Caco-2 (cell line): ENCODE measurements at regions of chr3 and their contacts with region 1.

Region 1: DNA sequence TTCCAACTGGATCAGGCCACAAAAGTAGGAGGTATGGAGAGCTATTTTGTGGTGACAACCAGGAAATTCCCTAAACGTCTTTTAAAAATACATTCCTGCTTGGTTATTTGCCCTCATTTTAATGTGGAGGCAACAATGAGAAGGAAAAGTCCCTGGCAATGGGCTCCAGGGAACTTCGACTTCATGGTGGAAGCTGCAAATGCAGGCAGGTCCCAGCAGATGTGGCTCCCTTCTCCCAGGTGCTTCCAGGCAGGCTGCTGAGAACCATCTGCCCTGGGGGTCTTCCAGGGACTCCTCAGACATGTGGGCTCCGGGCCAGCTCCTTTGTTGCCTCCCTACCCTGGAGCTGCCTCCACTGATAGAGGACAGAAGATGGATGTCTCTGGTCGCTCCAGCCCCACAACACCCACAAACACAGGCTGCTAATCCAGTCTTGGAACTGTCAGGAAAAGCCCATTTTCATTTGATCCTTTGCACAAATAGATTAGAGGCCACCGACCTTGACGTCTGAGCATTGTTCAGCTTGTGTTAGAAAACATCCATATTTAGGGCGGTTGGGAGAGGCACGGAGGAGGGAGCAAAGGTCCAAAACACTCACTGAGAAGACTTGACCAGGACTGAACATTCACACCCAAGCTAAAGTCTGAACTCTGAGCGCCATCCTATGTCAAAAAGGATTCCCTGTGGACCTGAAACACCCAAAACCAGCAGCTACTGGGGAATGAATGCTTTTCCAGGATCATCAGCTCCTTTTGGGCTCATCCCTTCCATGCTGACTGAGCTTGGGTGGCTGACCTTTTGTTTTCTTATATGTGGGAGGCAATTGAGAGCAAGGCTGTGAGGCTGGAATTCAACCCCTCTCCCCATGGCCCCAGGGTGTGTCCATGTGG is 30.2 kb upstream of the SLCO2A1 start:
- DNase-seq: peak; percentile 30 to 44
- H3K4me3 ChIP-seq: no peak overlapping the region
- H3K4me3 Mint-ChIP-seq: no peak overlapping the region
- H3K27ac Mint-ChIP-seq: no peak overlapping the region
- H3K4me1 ChIP-seq: peaks cover 48% of the 10 kb centered on the region
- H3K4me1 Mint-ChIP-seq: peaks cover 29% of the 10 kb centered on the region
- H3K27me3 ChIP-seq: no peaks in the 10 kb centered on the region
- H3K27me3 Mint-ChIP-seq: no peaks in the 10 kb centered on the region
- CTCF ChIP-seq: peak in 1 of 2 experiments; percentile 33

Region 2: DNA sequence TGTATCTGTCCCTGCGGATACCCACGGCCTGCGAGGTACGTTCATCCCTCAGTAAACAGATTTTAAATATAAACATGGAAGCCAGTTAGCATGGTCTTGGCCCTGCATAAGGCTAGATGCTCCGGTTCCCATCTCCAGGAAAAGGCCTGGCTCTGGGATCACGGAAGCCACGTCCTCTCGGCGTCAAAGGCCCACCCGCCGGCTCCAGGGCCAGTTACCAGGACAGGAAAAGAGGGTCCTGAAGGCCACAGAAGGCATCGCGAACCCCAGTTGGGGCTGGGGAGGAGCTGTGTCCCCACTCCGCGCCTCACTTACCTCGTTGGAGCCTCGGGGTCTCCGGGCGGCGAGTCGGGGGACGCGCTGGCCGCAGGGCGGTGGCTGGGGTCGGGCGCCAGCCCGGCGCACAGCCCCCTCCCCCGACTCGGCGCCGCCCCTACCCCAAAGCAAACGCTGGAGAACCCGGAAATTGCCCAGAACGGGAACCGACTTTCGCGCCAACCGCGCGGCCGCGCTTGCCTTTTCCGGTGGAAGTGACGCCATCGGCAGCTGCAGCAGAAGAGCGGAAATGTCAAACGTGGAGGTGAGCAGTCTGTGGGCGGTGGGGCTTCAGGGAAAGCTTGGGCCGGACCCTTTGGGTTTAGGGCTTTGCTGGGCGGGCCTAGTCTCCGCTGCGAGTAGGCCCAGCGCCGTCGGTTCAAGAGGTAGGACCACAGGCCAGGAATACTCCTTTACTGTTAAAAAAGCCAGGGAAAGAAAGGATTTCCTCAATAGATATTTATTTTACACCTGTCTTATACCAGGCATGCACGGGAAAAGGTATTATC is 398.2 kb before region 1 on chr3 and contains the start of gene TOPBP1:
- CTCF ChIA-PET with region 1: no interaction called
- POLR2A ChIA-PET with region 1: no interaction called
- intact Hi-C with region 1: loop called (anchors 5 kb)
- DNase-seq: peak; percentile 85 to 87
- H3K4me3 ChIP-seq: peak within 1 kb of the TSS; percentile 78
- H3K4me3 Mint-ChIP-seq: peak within 1 kb of the TSS; percentile 80
- H3K27ac Mint-ChIP-seq: peak within 1 kb of the TSS; percentile 80
- H3K4me1 ChIP-seq: peaks cover 24% of the 10 kb centered on the region
- H3K4me1 Mint-ChIP-seq: peaks cover 15% of the 10 kb centered on the region
- H3K27me3 ChIP-seq: no peaks in the 10 kb centered on the region
- H3K27me3 Mint-ChIP-seq: no peaks in the 10 kb centered on the region
- CTCF ChIP-seq: no peak
- total RNA-seq, gene TOPBP1: 57.1 and 68.2 TPM in 2 replicates

Region 3: DNA sequence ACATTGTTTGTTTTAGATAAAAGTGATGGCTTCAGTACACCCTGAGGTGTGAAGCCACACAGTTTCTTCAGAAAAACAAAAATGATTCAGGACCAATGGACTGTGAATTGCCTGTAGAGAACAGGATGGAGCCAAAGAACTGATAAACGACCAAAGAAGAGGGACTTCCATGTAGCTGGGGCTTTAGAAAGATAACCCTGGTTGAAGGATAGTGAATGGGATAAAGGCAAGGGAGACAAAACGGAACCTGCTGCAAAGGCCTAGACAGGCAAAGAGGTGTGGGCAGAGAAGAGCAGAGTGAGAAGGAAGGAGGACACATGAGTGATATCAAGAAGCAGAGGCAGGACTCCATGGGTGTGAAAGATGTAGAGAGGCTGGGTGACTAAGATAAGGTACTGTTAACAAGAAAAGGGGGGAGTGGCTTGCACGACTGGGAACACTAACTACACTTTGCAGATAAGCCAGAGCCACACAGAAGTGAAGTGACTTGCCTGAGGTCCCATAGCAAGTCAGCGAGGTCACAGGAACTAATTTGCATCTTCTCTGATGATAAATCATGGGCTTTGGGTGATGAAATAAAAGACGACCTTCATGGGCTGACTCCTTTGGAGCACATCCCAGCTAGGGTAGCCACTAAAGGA is 208.5 kb before region 1 on chr3:
- CTCF ChIA-PET with region 1: no interaction called
- POLR2A ChIA-PET with region 1: no interaction called
- intact Hi-C with region 1: no loop called
- DNase-seq: peak in 1 of 2 experiments; percentile 5
- H3K4me3 ChIP-seq: no peak overlapping the region
- H3K4me3 Mint-ChIP-seq: no peak overlapping the region
- H3K27ac Mint-ChIP-seq: no peak overlapping the region
- H3K4me1 ChIP-seq: no peaks in the 10 kb centered on the region
- H3K4me1 Mint-ChIP-seq: peaks cover 8% of the 10 kb centered on the region
- H3K27me3 ChIP-seq: no peaks in the 10 kb centered on the region
- H3K27me3 Mint-ChIP-seq: peaks cover 8% of the 10 kb centered on the region
- CTCF ChIP-seq: no peak

Region 4: GRCh38 chr3:133930341-133930933 is 129.5 kb before region 1 on chr3:
- CTCF ChIA-PET with region 1: interaction called, 5 read pairs
- POLR2A ChIA-PET with region 1: no interaction called
- intact Hi-C with region 1: loop called (anchors 1 kb)
- DNase-seq: peak in 1 of 2 experiments; percentile 49
- H3K4me3 ChIP-seq: no peak overlapping the region
- H3K4me3 Mint-ChIP-seq: no peak overlapping the region
- H3K27ac Mint-ChIP-seq: no peak overlapping the region
- H3K4me1 ChIP-seq: no peaks in the 10 kb centered on the region
- H3K4me1 Mint-ChIP-seq: no peaks in the 10 kb centered on the region
- H3K27me3 ChIP-seq: no peaks in the 10 kb centered on the region
- H3K27me3 Mint-ChIP-seq: no peaks in the 10 kb centered on the region
- CTCF ChIP-seq: peak; percentile 64 to 75

Region 5: GRCh38 chr3:134029734-134030378 is 30.1 kb before region 1 on chr3 and contains the start of gene SLCO2A1:
- CTCF ChIA-PET with region 1: no interaction called
- POLR2A ChIA-PET with region 1: no interaction called
- intact Hi-C with region 1: loop called (anchors 1 kb)
- DNase-seq: peak; percentile 68 to 69
- H3K4me3 ChIP-seq: peak within 1 kb of the TSS; percentile 78
- H3K4me3 Mint-ChIP-seq: peak within 1 kb of the TSS; percentile 91
- H3K27ac Mint-ChIP-seq: peak within 1 kb of the TSS; percentile 53
- H3K4me1 ChIP-seq: no peaks in the 10 kb centered on the region
- H3K4me1 Mint-ChIP-seq: peaks cover 14% of the 10 kb centered on the region
- H3K27me3 ChIP-seq: no peaks in the 10 kb centered on the region
- H3K27me3 Mint-ChIP-seq: peaks cover 7% of the 10 kb centered on the region
- CTCF ChIP-seq: no peak
- total RNA-seq, gene SLCO2A1: 2.2 and 2.5 TPM in 2 replicates

Region 6: DNA sequence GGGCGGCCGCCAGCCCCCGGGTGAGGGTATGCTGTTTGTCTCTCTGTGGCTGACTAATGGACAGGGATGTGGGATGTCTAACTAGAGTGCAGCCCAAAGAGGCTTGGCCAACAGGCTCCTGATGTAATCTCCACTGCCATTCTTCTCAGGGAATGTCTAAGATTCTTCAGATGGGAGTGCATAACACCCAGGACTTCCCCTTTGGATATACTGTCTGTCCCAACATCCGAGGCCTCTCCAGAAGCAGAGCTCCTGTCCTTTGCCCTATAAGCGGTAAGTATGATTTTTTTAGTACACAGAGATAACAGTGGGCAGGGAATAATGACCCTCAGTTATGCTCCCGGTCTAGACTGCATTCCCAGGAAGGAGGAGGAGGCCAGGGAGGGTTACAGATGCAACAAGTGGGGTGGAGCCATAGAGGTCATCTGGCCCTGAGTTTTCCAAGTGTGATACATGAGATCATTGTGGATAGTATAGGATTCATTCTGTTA is 32.3 kb after region 1 on chr3:
- CTCF ChIA-PET with region 1: interaction called, 3 read pairs
- POLR2A ChIA-PET with region 1: no interaction called
- intact Hi-C with region 1: loop called (anchors 1 kb)
- DNase-seq: peak; percentile 46 to 83
- H3K4me3 ChIP-seq: no peak overlapping the region
- H3K4me3 Mint-ChIP-seq: peak overlapping the region; percentile 7
- H3K27ac Mint-ChIP-seq: peak overlapping the region; percentile 39
- H3K4me1 ChIP-seq: peaks cover 10% of the 10 kb centered on the region
- H3K4me1 Mint-ChIP-seq: peaks cover 12% of the 10 kb centered on the region
- H3K27me3 ChIP-seq: no peaks in the 10 kb centered on the region
- H3K27me3 Mint-ChIP-seq: no peaks in the 10 kb centered on the region
- CTCF ChIP-seq: no peak